ENCODE measurements at regions of chrX and their contacts with region 1.

Region 1: GRCh38 chrX:104136241-104137019 is 20.4 kb downstream of the SLC25A53 start:
- H3K4me3 Mint-ChIP-seq: peak overlapping the region; percentile 4
- H3K27ac Mint-ChIP-seq: no peak overlapping the region
- H3K4me1 Mint-ChIP-seq: peaks cover 12% of the 10 kb centered on the region
- H3K27me3 Mint-ChIP-seq: no peaks in the 10 kb centered on the region

Region 2: DNA sequence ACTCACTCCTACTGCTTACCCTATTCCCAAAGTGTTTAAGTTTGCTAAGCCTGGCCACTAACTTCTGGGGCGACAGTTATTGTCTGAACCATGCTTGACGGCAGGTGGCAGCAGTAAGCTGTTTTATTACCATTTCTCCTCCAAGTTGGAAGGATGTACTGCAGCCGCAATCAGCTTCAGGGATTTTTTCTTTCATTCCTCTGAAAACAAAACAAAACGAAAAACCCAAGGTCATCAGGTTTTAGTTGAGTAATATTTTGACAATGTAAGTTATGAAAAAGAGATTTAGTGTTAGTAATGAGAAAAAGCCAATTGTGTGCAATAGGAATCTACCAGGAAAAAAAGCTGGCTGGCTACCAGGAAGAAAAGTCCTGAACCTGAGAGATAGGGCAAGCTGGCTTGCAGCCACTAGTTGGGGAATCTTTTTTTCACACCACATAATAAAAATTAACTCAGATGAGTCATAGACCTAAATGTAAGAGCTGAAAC is 291.2 kb before region 1 on chrX:
- intact Hi-C with region 1: loop called (anchors 2 kb)
- H3K4me3 Mint-ChIP-seq: no peak overlapping the region
- H3K27ac Mint-ChIP-seq: no peak overlapping the region
- H3K4me1 Mint-ChIP-seq: no peaks in the 10 kb centered on the region
- H3K27me3 Mint-ChIP-seq: no peaks in the 10 kb centered on the region

Region 3: GRCh38 chrX:104098151-104098808 is 38.1 kb before region 1 on chrX:
- intact Hi-C with region 1: loop called (anchors 2 kb)
- H3K4me3 Mint-ChIP-seq: no peak overlapping the region
- H3K27ac Mint-ChIP-seq: no peak overlapping the region
- H3K4me1 Mint-ChIP-seq: no peaks in the 10 kb centered on the region
- H3K27me3 Mint-ChIP-seq: peaks cover 6% of the 10 kb centered on the region

Measured in dendritic cell treated with granulocyte-macrophage colony-stimulating factor and Interleukin-4, amounts not matched to agents 40 ng/mL and 50 ng/mL, for 4 days (primary cell).